Posterior vena cava (tissue), 2 donors: ENCODE measurements at regions of chr6 and their contacts with region 1.

Region 1: DNA sequence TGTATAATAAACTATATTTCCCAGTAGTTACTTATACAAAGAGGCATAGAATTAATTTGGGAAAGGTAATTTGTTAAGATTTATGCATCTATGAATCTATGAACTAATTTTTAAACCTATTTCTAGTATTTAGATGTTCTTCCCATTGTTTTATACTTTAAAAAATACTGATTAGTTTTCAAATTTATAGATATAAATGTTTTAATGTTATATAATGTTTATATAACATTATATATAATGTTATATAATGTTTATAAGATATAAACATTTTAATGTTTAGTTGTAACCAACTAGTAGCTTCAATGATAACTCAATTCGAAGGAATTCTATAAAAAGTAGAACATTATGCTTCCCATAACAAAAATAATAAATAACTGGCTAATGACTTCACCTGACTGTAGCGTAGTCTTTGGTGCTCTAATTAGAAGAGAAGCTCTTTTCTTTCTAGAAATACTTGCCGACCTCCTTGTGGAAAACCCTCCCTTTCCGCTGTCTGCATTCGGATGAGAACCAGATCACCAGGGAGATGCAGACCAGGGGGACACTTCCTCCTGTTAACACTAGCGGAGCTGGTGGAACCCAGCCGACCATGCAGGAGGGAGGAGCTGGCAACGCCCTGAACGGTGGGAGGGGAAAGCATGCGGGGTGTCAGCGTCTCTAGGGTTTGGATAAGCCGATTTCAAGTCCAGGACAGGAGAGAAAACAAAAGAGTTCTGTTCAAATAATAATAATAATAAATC is 158.4 kb downstream of the OR2B2 start:
- DNase-seq: peak; percentile 87

Region 2: DNA sequence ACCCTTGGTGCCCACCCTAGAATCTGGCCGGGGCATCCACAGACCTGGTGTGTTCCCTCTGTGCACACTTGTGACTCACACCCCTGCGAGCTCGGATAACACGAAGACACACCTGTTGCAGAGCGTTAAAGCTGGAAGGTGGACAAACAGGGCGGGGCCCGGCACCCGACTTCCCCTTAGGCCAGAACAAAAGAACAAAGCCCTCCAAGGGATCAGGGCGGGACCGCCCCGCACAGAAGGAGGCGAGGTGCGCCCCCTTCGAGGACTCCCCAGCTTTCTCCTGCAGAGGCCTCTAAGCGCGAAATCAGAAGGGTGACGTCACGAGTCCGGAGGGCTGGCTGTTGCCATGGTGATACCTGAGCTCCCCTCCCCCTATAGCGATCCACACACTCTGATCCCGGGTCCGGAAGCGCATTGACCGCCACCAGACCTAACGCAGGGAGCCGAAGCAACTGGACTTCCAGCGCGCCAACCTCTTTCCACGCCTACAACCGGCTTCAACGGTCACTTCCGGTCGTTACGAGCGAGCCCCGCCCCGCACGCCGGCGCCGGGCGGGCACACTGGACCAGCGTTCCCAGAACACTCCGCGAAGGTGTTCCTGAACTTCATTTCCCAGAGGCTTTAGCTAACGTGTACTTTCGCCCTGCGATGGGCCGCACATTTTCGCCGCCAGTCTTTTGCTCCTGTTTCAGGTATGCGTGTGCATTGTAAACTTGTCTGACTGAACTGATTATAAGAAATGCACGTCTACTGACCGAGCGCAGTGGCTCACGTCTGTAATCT is 281.0 kb before region 1 on chr6 and contains the start of gene ZNF184:
- intact Hi-C with region 1: loop called in 1 of 2 experiments (anchors 10 kb)
- DNase-seq: peak; percentile 99
- total RNA-seq, gene ZNF184: 6.3 to 6.5 TPM

Region 3: GRCh38 chr6:27518881-27519795 is 234.7 kb before region 1 on chr6:
- intact Hi-C with region 1: loop called in 1 of 2 experiments (anchors 10 kb)
- DNase-seq: peak; percentile 84